CD8-positive, alpha-beta memory T cell (primary cell): ENCODE measurements at regions of chr7 and their contacts with region 1.

Region 1: DNA sequence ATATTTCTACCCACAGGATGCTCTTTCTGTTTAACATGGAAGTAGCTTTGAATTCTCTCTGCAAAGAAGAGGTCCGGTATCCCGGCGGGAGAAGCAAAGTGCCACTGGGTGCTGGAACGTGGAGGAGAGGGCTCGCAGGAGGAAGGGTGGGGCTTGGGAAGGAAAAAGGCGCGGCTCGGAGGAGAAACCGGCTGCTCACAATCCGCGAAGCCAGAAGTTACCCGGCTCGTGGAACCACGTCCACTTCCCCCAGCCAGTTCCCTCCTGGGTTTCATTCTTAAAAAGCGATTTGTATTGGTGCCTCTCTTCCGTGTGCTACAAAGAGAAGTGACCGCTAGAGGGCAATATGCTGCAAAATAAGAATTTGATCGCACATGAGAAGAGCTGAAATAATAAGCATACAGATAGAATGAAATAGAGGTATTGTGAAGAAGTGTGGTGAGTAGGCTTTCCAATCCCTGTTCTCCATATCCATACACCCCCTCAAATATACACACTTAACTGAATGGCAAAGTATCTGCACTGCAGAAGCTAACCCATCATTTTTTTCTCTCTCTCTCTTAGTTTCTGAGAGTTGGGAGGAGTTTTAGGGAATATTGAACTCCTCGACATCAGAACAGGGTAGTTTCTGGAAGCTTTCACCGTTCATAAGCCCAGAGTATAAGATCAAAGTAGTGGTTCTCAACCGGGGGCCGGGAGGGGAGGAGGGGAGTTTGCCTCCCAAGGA is 31.1 kb downstream of the TRIL start:
- DNase-seq: peak; percentile 10 to 59 (median 58)
- H3K4me3 ChIP-seq: peak overlapping the region; percentile 75
- H3K4me3 Mint-ChIP-seq: peak overlapping the region; percentile 83 to 96 (median 93)
- H3K27ac ChIP-seq: no peak overlapping the region
- H3K27ac Mint-ChIP-seq: peak overlapping the region in 5 of 8 donors; percentile 27 to 90 (median 85)
- H3K4me1 ChIP-seq: peaks cover 14% of the 10 kb centered on the region
- H3K4me1 Mint-ChIP-seq: peaks cover 22 to 30% (median 25%) of the 10 kb centered on the region in 3 donors
- H3K27me3 ChIP-seq: no peaks in the 10 kb centered on the region
- H3K27me3 Mint-ChIP-seq: peaks cover 3 to 9% of the 10 kb centered on the region in 2 donors

Region 2: GRCh38 chr7:28939844-28940544 is 13.0 kb after region 1 on chr7:
- CTCF ChIA-PET with region 1: interaction called, 12 read pairs
- POLR2A ChIA-PET with region 1: no interaction called
- DNase-seq: no peak
- H3K4me3 ChIP-seq: no peak overlapping the region
- H3K4me3 Mint-ChIP-seq: no peak overlapping the region
- H3K27ac ChIP-seq: no peak overlapping the region
- H3K27ac Mint-ChIP-seq: no peak overlapping the region
- H3K4me1 ChIP-seq: no peaks in the 10 kb centered on the region
- H3K4me1 Mint-ChIP-seq: no peaks in the 10 kb centered on the region
- H3K27me3 ChIP-seq: no peaks in the 10 kb centered on the region
- H3K27me3 Mint-ChIP-seq: peaks cover 19 to 46% of the 10 kb centered on the region in 2 donors